H1 (cell line): ENCODE measurements at regions of chr15 and their contacts with region 1.

Region 1: DNA sequence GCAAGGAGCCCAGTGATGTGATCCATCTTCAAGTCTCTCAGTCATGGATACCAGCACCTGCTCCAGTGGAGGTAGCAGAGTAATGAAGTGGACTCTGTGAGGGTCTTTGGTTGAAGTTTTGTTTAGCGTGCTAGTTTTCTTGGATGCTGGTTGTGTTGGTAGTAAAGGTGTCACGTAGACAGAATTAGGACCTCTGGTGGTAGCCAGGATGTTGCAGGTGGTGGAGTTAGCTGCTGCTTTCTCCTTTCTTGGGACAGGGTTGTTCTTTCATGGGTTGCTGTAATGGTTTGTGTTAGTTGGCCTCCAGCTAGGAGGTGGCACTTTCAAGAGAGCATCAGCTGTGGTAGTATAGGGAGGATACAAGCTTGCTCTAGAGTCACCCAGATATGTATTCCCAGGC is 125.2 kb downstream of the ANXA2 start:
- DNase-seq: no peak
- H3K4me3 ChIP-seq: no peak overlapping the region
- H3K27ac ChIP-seq: no peak overlapping the region
- H3K4me1 ChIP-seq: no peaks in the 10 kb centered on the region
- H3K27me3 ChIP-seq: no peaks in the 10 kb centered on the region
- CTCF ChIP-seq: peak; percentile 25 to 44 (median 29); a peak in 3 of 4 replicates
- EP300 ChIP-seq: no peak
- POLR2A ChIP-seq: no peak
- RAD21 ChIP-seq: peak; percentile 31 to 41; a peak in 3 of 4 replicates

Region 2: DNA sequence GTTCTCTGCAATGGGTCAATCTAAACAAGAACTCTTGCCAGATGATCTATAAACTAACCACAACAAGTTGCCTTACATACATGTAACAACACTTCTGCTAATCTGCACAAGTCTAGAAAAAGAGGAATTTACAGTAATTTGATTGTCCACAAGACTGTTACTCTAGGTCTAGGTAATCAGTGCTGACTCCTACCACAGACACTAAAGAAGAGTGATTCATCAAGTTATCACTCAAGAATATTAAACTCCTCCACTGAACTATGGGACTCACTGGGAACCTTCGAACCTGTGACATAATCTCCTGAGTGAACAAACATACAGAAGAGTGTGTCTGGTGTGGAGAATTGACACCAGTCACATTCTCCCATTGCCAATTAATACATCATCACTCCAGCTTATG is 13.2 kb before region 1 on chr15:
- CTCF ChIA-PET with region 1: interaction called, 15 read pairs
- POLR2A ChIA-PET with region 1: no interaction called
- DNase-seq: no peak
- H3K4me3 ChIP-seq: no peak overlapping the region
- H3K27ac ChIP-seq: no peak overlapping the region
- H3K4me1 ChIP-seq: no peaks in the 10 kb centered on the region
- H3K27me3 ChIP-seq: 0 out of 7 replicates have a peak, but pooled peaks cover 0 to 2% (median under 1%) of the 10 kb centered on the region in 4 experiments
- CTCF ChIP-seq: no peak
- EP300 ChIP-seq: no peak
- POLR2A ChIP-seq: no peak
- RAD21 ChIP-seq: no peak